Activated CD4-positive, alpha-beta T cell treated with anti-CD3 and anti-CD28 coated beads, Interleukin-2, amount 10 ng/mL, durations not matched to agents 24 days and 14 days (primary cell): ENCODE measurements at regions of chr1 and their contacts with region 1.

Region 1: DNA sequence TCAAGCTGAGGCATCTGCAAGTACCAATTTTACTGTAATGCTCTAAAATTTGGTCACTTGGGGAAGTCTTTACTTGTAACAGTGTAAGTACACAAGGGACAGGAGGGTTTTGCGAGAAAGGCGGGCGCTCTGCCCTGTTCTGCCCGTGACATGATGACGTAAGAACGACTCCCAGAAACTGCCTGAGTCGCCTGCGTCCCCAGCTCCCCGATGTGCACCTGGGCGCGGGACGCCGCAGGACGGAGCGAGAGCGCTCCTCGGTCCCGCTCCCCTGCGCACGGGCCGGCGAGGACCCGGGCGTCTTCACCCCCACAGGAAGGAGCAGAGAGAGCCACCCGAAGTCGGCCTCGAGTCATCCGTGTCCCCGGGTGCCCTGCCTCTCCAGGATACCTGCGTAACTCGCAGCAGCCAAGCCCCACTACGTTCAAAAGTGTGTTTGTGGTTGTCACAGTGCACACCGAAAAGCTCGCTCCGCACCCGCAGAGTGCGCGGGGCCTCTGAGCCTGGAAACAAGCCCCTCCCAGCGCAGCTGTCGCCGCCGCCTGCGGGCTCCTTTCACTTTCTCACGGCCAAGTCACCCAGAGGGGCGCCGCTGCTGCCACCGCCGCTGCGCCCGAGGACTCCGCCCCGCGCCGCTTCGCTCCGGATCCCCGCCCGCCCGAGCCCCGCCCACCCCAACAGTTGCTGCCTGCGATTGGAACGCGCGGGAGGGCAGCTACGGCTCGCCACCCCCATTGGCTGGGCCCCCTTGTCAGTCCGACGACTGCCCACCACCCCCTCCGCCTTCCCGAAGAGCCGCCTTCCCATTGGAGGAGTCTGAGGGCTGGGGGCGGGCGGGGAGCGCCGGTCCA is 3.2 kb upstream of the ZBTB18 start:
- DNase-seq: peak; percentile 97
- H3K4me3 Mint-ChIP-seq: peak overlapping the region; percentile 97
- H3K27ac Mint-ChIP-seq: peak overlapping the region; percentile 95
- H3K4me1 Mint-ChIP-seq: peaks cover 28% of the 10 kb centered on the region
- H3K27me3 Mint-ChIP-seq: peaks cover 47% of the 10 kb centered on the region

Region 2: GRCh38 chr1:243596431-243597062 is 451.3 kb before region 1 on chr1:
- intact Hi-C with region 1: loop called (anchors 1 kb)
- DNase-seq: peak; percentile 81
- H3K4me3 Mint-ChIP-seq: peak overlapping the region; percentile 43
- H3K27ac Mint-ChIP-seq: peak overlapping the region; percentile 87
- H3K4me1 Mint-ChIP-seq: peaks cover 24% of the 10 kb centered on the region
- H3K27me3 Mint-ChIP-seq: no peaks in the 10 kb centered on the region

Region 3: GRCh38 chr1:244272471-244273261 is 224.8 kb after region 1 on chr1:
- intact Hi-C with region 1: loop called (anchors 2 kb)
- DNase-seq: peak; percentile 91
- H3K4me3 Mint-ChIP-seq: no peak overlapping the region
- H3K27ac Mint-ChIP-seq: no peak overlapping the region
- H3K4me1 Mint-ChIP-seq: peaks cover 9% of the 10 kb centered on the region
- H3K27me3 Mint-ChIP-seq: peaks cover 1% of the 10 kb centered on the region

Region 4: GRCh38 chr1:244835276-244836134 is 787.7 kb after region 1 on chr1 and contains the start of gene COX20:
- intact Hi-C with region 1: loop called (anchors 10 kb)
- DNase-seq: peak; percentile 97
- H3K4me3 Mint-ChIP-seq: peak within 1 kb of the TSS; percentile 91
- H3K27ac Mint-ChIP-seq: peak within 1 kb of the TSS; percentile 99
- H3K4me1 Mint-ChIP-seq: peaks cover 43% of the 10 kb centered on the region
- H3K27me3 Mint-ChIP-seq: no peaks in the 10 kb centered on the region
- total RNA-seq, gene COX20: 28.6 and 30.0 TPM in 2 replicates